Kidney (tissue), 22 donors: ENCODE measurements at regions of chr20 and their contacts with region 1.

Region 1: DNA sequence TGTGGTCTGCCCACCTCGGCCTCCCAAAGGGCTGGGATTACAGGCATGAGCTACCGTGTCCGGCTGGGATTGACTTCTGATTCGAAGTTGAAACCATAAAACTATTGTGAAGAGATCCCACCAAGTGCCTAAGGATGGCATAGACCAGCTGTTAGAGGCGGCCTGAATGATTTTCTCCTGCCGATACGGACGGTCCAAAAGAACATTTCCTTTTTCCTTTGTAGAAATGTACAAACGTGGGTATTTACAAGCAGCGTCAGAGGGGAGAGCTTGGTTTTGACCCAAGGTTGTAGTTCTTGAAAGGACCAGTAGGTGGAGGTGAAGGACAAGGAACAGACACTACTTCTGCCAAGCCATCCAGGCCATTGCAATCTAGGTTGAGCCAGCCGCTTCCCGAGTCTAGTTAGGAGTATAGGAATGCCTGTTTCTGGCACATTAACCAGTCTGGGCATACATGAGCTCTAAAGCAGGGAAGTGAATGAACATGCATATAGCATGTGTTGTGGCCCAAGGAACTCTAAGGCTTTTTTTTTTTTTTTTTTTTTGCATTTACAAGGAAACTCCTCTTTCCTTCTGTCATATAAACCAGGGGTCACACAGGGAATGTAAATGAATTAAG is 29.1 kb downstream of the MOCS3 start:
- DNase-seq: peak in 4 of 5 donors; percentile 84 to 95 (median 90)
- H3K4me3 ChIP-seq: no peak overlapping the region
- H3K27ac ChIP-seq: no peak overlapping the region
- H3K4me1 ChIP-seq: no peaks in the 10 kb centered on the region
- H3K27me3 ChIP-seq: no peaks in the 10 kb centered on the region
- CTCF ChIP-seq: peak; percentile 87

Region 2: GRCh38 chr20:50865591-50865990 is 122.1 kb before region 1 on chr20:
- intact Hi-C with region 1: no loop called
- DNase-seq: no peak
- H3K4me3 ChIP-seq: no peak overlapping the region
- H3K27ac ChIP-seq: no peak overlapping the region
- H3K4me1 ChIP-seq: no peaks in the 10 kb centered on the region
- H3K27me3 ChIP-seq: no peaks in the 10 kb centered on the region
- CTCF ChIP-seq: no peak

Region 3: DNA sequence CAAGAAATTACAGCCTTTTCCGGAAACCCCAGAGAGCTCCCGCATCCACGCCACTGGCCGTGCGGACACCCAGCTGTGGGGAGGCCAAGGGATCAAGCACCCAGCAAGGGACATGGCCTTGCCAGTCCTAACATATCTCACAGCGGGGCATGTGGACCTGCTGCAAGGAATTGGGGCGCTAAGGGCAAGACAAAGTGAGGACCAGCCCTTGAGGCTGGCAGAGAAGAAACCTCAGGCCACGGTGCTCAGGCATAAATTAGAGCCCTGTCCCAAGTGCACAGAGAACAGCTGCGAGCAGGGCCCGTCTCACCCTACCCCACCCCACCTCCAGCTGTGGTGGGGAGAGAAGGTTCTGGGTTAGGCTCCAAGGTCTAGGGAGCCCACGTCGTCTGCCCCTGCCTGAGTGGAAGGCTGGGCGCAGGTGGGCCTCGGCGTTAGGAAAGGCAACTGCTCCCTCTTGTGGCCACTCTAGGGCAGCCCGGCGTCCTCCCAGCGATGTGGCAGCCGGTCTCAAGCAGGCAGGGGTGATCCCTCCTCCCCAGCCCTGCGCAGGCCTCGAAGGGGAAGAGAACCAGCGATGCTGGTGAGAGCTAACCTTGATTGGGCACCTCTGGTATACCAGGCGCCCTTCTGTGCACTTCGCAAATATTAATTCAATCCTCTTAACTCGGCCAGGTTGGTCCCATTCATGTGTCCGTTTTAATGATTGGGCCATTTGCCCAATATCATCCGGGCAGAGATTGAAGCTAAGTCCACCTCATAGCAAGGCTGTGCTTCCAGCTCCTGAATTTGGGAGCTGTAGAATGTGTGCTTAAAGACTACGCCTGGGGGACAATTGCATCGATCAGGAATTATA is 319.0 kb after region 1 on chr20:
- intact Hi-C with region 1: loop called (anchors 5 kb)
- DNase-seq: peak; percentile 79 to 86 (median 84)
- H3K4me3 ChIP-seq: no peak overlapping the region
- H3K27ac ChIP-seq: no peak overlapping the region
- H3K4me1 ChIP-seq: peaks cover 0 to 3% (median 0%) of the 10 kb centered on the region in 3 donors
- H3K27me3 ChIP-seq: no peaks in the 10 kb centered on the region
- CTCF ChIP-seq: peak; percentile 85